Endothelial cell of umbilical vein (primary cell): ENCODE measurements at regions of chr12 and their contacts with region 1.

Region 1: GRCh38 chr12:50887191-50887590 is 44.5 kb downstream of the TMPRSS12 start:
- DNase-seq: no peak
- H3K4me3 ChIP-seq: no peak overlapping the region
- H3K27ac ChIP-seq: no peak overlapping the region
- H3K4me1 ChIP-seq: no peaks in the 10 kb centered on the region
- H3K27me3 ChIP-seq: no peaks in the 10 kb centered on the region
- CTCF ChIP-seq: no peak
- POLR2A ChIP-seq: no peak

Region 2: GRCh38 chr12:50901685-50902113 is 14.5 kb after region 1 on chr12:
- CTCF ChIA-PET with region 1: interaction called, 10 read pairs
- POLR2A ChIA-PET with region 1: no interaction called
- dilution Hi-C with region 1: no loop called
- intact Hi-C with region 1: no loop called
- DNase-seq: no peak
- H3K4me3 ChIP-seq: no peak overlapping the region
- H3K27ac ChIP-seq: no peak overlapping the region
- H3K4me1 ChIP-seq: no peaks in the 10 kb centered on the region
- H3K27me3 ChIP-seq: no peaks in the 10 kb centered on the region
- CTCF ChIP-seq: no peak
- POLR2A ChIP-seq: no peak